ENCODE measurements at regions of chr7 and their contacts with region 1.

Region 1: DNA sequence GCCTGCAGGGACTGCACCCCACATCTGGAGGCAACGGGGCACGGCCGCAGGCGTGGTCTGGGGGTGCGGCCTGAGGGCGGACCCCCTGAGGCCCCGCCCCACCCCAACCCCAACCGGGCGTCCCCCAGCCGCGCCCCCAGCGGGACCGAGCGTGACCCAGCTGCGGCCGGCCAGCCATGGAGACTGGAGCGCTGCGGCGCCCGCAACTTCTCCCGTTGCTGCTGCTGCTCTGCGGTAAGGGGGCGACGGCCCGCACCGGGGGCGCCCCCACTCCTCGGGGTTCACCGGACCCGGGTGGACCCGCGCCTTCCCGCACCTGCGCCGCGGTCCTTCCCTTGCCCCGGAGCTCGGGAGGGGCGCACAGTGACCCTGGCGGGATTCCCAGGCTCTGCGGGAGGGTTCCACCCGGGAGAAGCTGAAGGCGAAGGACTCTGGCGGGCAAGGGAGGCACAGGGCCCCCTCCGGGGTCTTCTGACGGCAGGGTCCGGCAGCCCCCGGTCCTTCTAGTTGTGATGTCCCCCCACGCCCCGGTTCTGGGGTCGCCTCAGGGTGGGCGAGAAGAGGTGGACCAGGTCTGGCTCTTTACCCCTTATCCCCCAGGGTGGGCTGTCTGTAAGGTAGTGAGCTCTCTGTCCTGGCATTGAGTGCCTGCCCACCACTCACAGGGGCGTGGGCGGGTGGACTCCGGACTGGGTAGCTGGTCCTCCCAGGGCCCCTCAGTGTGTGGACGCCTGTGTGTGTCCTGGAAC is at the start of gene RAMP3:
- DNase-seq: peak in 1 of 5 donors; percentile 74
- H3K4me3 ChIP-seq: peak within 1 kb of the TSS; percentile 20 to 51 (median 50)
- H3K27ac ChIP-seq: peak within 1 kb of the TSS; percentile 9 to 33
- H3K4me1 ChIP-seq: peaks cover 0 to 3% (median 0%) of the 10 kb centered on the region in 3 donors
- H3K27me3 ChIP-seq: peaks cover 3% of the 10 kb centered on the region
- CTCF ChIP-seq: no peak
- total RNA-seq, gene RAMP3: 82.6 TPM

Region 2: DNA sequence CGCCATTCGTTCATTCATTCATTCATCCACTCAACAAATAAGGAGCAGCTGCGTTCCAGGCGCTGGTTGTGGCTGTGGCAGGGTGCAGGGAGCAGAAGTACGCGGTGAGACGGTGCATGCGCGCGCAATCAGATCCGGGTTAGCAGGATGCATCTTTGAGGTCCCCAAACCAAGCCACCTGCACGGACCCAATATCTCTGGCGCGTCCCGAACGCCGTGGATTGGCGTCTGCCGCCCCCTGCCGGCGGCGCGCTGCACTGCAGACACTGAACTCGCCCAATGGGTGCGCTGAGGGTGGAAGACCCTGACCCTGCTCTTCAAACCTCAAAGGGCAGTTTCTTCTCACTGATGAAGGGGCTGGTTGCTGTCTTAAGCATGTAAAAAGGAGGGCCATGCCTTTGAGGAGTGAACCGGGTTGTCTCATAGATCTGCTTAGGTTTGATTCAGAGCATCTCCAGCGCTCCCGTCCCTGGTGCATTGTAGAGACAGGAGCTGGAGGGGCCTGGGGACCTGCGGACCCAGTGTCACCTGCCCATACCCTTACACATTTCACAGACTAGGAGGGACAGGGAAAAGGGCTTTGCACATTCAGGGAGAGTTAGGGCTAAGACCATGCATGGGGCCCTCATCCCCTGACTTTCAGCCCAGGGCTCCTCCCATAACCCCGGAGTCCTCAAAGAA is 102.3 kb after region 1 on chr7:
- intact Hi-C with region 1: loop called (anchors 5 kb)
- DNase-seq: peak; percentile 35 to 84 (median 54)
- H3K4me3 ChIP-seq: no peak overlapping the region
- H3K27ac ChIP-seq: no peak overlapping the region
- H3K4me1 ChIP-seq: peaks cover 0 to 2% (median 0%) of the 10 kb centered on the region in 3 donors
- H3K27me3 ChIP-seq: no peaks in the 10 kb centered on the region
- CTCF ChIP-seq: peak; percentile 99

Region 3: GRCh38 chr7:45306752-45307305 is 149.0 kb after region 1 on chr7:
- intact Hi-C with region 1: no loop called
- DNase-seq: no peak
- H3K4me3 ChIP-seq: no peak overlapping the region
- H3K27ac ChIP-seq: no peak overlapping the region
- H3K4me1 ChIP-seq: no peaks in the 10 kb centered on the region
- H3K27me3 ChIP-seq: no peaks in the 10 kb centered on the region
- CTCF ChIP-seq: no peak

Region 4: DNA sequence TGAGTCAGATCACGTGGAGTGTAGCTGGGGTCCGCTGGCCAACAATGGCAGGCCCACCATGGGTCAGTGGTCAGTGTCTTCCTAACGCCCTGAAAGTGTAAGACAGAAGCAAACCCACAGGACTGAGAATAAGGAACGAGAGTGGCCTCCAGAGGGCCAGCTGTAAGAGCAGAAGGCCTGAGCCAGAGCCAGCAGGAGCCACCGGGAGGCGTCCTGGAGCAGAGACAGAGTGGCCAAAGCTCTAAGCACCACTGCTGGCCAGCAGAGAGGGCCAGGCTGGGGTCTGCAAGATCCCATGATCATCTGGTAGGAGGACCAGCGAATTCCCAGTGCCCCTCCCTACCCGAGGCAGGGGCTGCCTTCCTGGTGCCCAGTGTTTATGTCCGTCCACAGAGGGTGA is 705.9 kb after region 1 on chr7:
- intact Hi-C with region 1: loop called (anchors 10 kb)
- DNase-seq: no peak
- H3K4me3 ChIP-seq: no peak overlapping the region
- H3K27ac ChIP-seq: no peak overlapping the region
- H3K4me1 ChIP-seq: no peaks in the 10 kb centered on the region
- H3K27me3 ChIP-seq: no peaks in the 10 kb centered on the region
- CTCF ChIP-seq: no peak